ENCODE measurements at regions of chr15 and their contacts with region 1.

Region 1: DNA sequence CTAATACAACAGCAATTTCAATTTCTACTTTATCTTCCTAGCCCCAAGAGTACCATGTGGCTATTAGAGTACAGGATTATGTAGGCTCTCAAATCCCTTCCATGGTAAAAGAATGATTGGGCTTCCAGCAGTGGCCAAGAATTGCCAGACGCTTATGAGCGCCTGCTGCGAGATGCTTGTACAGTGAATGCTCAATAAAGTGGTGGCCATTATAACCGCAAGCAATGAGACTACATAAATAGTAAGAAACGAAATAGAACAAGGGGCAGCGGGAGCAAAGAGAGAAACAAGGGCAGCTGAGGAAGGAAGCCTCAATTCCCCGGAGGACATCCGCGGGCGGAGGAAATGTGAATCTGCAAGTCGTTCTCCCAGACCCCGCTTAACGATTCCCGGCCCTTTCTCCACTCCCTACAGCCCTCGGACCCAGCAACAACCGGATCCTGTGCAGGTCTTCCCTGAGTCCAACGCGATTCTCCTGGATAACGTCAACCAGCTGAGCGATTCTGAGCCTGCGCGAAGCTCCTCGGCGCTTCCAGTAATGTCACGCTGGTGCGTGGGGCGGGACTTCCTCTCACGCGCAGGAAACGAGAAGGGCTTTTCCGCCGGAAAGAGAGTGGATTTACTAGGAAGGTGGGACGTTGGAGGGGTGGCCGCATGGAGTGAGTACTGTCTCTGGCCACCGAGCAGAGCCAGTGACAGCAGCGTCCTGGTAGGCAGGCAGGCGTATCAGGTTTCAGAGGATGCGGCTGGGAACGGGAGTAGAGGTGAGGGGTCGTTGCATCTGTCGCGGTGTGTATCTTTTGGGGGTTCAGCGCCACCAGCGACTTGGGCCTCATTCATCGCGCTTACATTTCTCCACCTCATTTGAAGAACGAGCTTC is 40.5 kb upstream of the AP3B2 start:
- DNase-seq: peak; percentile 95 to 96
- ATAC-seq: peak; percentile 98 to 99
- H3K4me3 ChIP-seq: peak overlapping the region; percentile 75
- H3K27ac ChIP-seq: peak overlapping the region; percentile 85 to 88
- H3K4me1 ChIP-seq: peaks cover 19% of the 10 kb centered on the region; the same call in 2 of the 3 replicates
- CTCF ChIP-seq: no peak
- EP300 ChIP-seq: no peak
- POLR2A ChIP-seq: peak; percentile 93
- RAD21 ChIP-seq: no peak

Region 2: GRCh38 chr15:82554351-82554750 is 195.8 kb before region 1 on chr15:
- CTCF ChIA-PET with region 1: no interaction called
- POLR2A ChIA-PET with region 1: no interaction called
- DNase-seq: no peak
- ATAC-seq: no peak
- H3K4me3 ChIP-seq: no peak overlapping the region
- H3K27ac ChIP-seq: no peak overlapping the region
- H3K4me1 ChIP-seq: no peaks in the 10 kb centered on the region
- CTCF ChIP-seq: no peak
- EP300 ChIP-seq: no peak
- POLR2A ChIP-seq: no peak
- RAD21 ChIP-seq: no peak

Region 3: GRCh38 chr15:82709421-82710207 is 40.6 kb before region 1 on chr15 and contains the start of gene AP3B2:
- CTCF ChIA-PET with region 1: no interaction called
- POLR2A ChIA-PET with region 1: interaction called, 11 read pairs
- DNase-seq: peak; percentile 77 to 86
- ATAC-seq: peak; percentile 92 to 95
- H3K4me3 ChIP-seq: peak within 1 kb of the TSS; percentile 82
- H3K27ac ChIP-seq: peak within 1 kb of the TSS; percentile 38 to 65; a peak in 4 of 6 replicates
- H3K4me1 ChIP-seq: 0 out of 3 replicates have a peak, but pooled peaks cover 4% of the 10 kb centered on the region
- CTCF ChIP-seq: no peak
- EP300 ChIP-seq: no peak
- POLR2A ChIP-seq: peak; percentile 23; the same call in 1 of the 2 replicates
- RAD21 ChIP-seq: no peak
- polyA plus RNA-seq, gene AP3B2: 0.56 and 0.68 TPM in 2 replicates

Region 4: GRCh38 chr15:82763361-82764116 is 13.3 kb after region 1 on chr15:
- CTCF ChIA-PET with region 1: interaction called, 8 read pairs
- POLR2A ChIA-PET with region 1: interaction called, 15 read pairs
- DNase-seq: no peak
- ATAC-seq: no peak
- H3K4me3 ChIP-seq: no peak overlapping the region
- H3K27ac ChIP-seq: no peak overlapping the region
- H3K4me1 ChIP-seq: 0 out of 3 replicates have a peak, but pooled peaks cover 1% of the 10 kb centered on the region
- CTCF ChIP-seq: no peak
- EP300 ChIP-seq: no peak
- POLR2A ChIP-seq: no peak
- RAD21 ChIP-seq: no peak

Region 5: DNA sequence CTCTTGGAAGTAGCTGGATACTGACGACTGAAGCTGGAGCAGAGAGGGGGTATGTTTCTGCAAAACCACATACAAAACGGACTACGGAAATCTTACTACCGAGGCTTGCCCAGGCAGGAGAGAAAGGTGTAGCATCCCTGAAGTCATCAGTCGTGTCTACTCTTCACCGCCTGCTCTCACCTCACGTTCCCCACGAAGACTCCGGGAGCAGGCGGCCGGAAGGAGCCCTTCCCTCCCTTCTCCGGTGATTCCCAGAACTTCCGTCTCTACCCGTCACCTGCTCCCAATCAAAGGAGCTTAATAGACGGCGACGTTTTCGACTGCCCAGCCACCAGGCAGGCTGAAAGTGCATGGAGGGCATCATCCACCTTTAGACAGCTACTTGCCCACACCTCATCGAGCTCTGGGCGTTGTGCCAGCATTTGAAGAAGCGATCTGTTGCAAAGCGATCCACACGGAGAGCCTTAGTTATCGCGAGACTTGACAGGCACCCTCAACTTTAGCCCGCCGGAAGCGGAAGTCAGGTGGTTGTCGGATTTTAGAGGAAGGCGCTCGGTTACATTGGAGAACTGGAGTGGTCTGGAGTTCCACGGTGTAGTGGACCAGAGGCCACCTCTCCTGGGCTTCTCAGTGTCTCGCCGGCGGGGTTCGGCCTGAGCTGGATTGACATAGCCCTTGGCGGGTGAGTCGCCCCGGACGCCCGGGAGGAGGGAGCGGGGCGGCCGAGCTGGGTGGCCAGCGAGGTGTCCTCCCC is 235.7 kb after region 1 on chr15 and contains the start of gene RAMAC:
- CTCF ChIA-PET with region 1: no interaction called
- POLR2A ChIA-PET with region 1: interaction called, 10 read pairs
- DNase-seq: peak; percentile 93 to 98
- ATAC-seq: peak; percentile 99
- H3K4me3 ChIP-seq: peak within 1 kb of the TSS; percentile 59
- H3K27ac ChIP-seq: peak within 1 kb of the TSS; percentile 95 to 96
- H3K4me1 ChIP-seq: peaks cover 13% of the 10 kb centered on the region
- CTCF ChIP-seq: no peak
- EP300 ChIP-seq: no peak
- POLR2A ChIP-seq: peak; percentile 45; the same call in 1 of the 2 replicates
- RAD21 ChIP-seq: no peak
- polyA plus RNA-seq, gene RAMAC: 50.3 and 68.1 TPM in 2 replicates

Measured in A549 (cell line).